ENCODE measurements at regions of chr2 and their contacts with region 1.

Region 1: GRCh38 chr2:131413148-131413747 is 49.3 kb upstream of the RAB6D start:
- DNase-seq: peak in 11 of 42 donors; percentile 8 to 67 (median 33)

Region 2: DNA sequence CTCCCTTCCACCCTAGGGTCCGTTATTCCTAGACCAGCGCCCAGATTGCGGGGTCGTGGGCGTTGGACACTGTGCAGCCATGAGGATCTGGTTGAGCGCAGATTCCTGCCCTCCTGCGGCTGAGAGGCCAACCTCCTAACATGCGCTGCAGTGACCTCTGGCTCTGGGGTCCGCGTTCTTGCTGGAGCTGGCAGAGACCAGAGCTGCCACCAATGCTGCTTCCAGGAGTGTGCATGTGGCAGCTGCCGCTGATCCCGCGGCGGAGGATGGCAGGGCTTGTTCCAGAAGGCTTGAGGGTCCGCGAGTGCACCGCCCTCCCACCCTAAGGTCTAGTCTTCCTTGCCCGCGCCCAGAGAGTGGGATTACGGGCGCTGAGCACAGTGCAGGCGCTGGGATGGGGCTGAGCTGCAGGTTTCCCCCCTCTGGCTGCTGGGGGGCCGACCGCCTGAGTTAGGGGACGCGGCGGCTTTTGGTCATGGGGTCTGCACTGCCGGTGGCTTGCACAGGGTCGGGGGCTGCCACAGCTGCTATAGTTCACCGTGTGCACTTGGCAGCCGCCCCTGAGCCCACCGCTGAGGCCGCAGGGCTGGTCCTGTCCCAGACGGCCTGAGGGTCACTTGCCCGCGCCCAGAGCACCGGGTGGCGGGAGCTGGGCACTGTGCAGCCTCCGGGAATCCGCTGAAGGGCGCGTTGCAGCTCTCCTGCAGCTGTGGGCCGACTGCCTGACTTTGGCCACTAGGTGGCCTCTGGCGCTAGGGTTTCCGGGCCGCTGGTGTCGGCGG is 260.3 kb after region 1 on chr2:
- intact Hi-C with region 1: loop called (anchors 10 kb)
- DNase-seq: peak; percentile 68 to 92 (median 86)